ENCODE measurements at regions of chr5 and their contacts with region 1.

Region 1: DNA sequence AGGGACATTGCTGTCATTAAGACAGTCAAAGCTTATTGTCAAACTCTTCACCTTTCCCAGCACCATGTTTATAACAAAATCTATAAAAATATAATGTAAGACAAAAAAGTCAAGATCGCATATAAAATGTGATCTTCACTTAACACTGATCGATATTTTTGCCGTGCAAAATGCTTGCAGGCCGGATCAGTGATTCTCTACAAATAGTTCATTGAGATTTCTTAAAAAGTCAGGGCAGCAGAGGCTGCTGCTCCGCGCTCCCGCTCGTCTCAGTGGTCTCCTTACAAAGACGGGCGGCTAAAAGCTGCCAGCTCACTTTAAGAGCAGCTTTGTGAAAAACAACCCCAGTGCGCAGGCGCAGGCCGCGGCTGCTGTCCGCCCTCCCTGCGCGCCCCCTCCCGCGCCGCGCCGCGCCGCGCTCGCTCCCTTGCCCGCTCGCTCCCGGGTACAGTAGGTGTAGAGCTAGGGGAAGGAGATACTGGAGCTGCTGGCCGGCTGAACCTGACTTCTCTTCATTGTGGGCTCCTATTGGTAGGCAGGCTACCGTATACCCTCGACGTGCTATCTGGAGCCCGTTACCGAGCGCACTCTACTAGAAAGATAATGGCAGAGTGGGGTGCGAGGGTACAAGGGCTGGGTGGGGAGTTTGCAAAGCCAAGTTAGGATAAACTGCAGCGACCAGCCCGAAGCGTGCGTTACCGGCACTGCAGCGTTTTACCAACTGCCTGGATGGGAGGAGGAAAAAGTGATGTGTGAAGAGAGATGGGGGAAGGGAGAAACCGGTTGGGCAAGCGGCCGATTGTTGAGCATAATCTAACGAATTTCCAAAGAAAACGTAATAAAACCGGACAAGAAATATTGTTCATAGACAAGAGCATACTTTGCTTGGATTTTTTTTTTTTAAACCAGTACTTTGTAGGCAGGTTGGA is at the start of gene ARRDC3:
- DNase-seq: peak; percentile 95
- H3K4me3 Mint-ChIP-seq: peak within 1 kb of the TSS; percentile 97
- H3K27ac Mint-ChIP-seq: peak within 1 kb of the TSS; percentile 97
- H3K4me1 Mint-ChIP-seq: peaks cover 15% of the 10 kb centered on the region
- H3K27me3 Mint-ChIP-seq: no peaks in the 10 kb centered on the region
- total RNA-seq, gene ARRDC3: 12.8 to 13.8 TPM

Region 2: DNA sequence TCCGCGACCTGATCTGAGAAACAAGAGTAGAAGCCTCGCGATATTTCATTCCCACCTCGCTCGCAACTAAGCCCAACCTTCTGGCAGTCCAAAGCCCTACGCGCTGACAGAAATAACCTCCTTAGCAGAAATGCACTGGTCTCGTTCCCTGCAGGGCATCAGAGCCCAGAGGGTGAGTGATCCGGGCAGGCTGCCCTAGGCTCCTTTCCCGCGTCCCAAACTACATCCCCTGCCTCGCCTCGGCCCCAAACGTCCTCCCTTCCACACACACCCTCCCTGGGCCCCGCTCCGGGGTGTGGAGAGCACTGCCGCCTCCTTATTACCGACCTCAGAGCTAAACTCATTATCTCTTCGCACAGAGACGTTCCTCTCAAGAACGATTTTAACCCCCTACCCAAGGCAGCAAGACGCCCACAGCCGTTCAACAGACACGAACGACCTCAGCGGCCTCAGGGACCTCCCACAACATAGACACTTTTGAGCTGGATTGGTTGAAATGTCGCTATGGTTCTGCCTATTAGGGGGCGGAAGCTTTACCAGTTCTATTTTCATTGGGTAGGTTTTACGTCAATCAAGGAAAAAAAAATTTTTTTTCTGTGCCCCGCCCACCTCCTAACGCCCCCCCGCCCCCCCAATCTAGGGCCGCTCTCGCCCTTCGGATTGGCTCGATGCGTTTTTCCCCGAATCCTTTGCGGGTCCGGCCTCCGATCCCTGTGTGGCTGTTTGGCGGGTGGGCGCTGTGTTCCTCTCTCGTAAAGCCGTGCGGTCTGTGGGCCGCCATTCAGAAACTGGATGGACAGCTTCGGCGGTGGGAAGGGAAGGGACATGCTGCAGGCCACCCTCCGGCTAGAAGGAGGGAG is 973.7 kb before region 1 on chr5 and contains the start of gene CETN3:
- CTCF ChIA-PET with region 1: no interaction called
- intact Hi-C with region 1: loop called (anchors 2 kb)
- DNase-seq: peak; percentile 93
- H3K4me3 Mint-ChIP-seq: no peak within 1 kb of the TSS
- H3K27ac Mint-ChIP-seq: no peak within 1 kb of the TSS
- H3K4me1 Mint-ChIP-seq: peaks cover 15% of the 10 kb centered on the region
- H3K27me3 Mint-ChIP-seq: no peaks in the 10 kb centered on the region
- total RNA-seq, gene CETN3: 41.9 to 45.3 TPM

Region 3: DNA sequence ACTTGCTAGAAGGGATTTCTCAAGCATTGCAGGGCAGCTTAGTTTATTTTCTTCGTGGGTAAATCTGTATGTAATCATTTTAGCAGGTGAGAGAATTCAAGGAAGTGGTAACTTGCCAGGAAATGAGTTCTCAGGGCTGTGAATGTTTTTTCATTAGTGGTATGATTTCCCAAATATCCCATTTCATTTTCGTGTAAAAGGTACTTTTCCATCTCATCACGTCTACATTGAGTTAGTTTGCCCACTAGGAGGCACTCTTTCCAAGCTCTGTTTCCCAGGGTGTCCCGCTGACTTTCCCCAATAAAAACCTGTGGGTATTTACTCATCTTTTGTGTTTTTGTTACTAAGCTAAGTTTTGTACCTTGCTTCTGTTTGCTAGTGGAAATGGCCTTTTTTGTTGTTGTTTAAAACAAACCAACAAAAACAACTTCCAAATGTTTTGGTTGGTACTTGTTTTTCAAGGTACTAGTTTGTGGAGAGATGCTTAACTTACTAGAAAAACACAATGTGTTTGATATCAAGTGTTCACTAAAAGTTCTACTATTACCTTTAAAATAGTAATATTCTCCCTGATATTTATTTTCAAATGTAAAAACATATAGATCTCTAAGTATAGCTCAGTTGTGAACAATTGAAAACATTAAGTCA is 451.1 kb before region 1 on chr5:
- CTCF ChIA-PET with region 1: interaction called, 37 read pairs
- intact Hi-C with region 1: loop called (anchors 1 kb)
- DNase-seq: peak; percentile 65
- H3K4me3 Mint-ChIP-seq: no peak overlapping the region
- H3K27ac Mint-ChIP-seq: no peak overlapping the region
- H3K4me1 Mint-ChIP-seq: peaks cover 5% of the 10 kb centered on the region
- H3K27me3 Mint-ChIP-seq: peaks cover 8% of the 10 kb centered on the region

Region 4: GRCh38 chr5:91101600-91102379 is 281.5 kb before region 1 on chr5:
- CTCF ChIA-PET with region 1: interaction called, 30 read pairs
- intact Hi-C with region 1: loop called (anchors 1 kb)
- DNase-seq: peak; percentile 70
- H3K4me3 Mint-ChIP-seq: no peak overlapping the region
- H3K27ac Mint-ChIP-seq: no peak overlapping the region
- H3K4me1 Mint-ChIP-seq: no peaks in the 10 kb centered on the region
- H3K27me3 Mint-ChIP-seq: peaks cover 2% of the 10 kb centered on the region

Region 5: GRCh38 chr5:91225848-91226686 is 157.2 kb before region 1 on chr5:
- CTCF ChIA-PET with region 1: interaction called, 184 read pairs
- intact Hi-C with region 1: loop called (anchors 1 kb)
- DNase-seq: peak; percentile 80
- H3K4me3 Mint-ChIP-seq: no peak overlapping the region
- H3K27ac Mint-ChIP-seq: no peak overlapping the region
- H3K4me1 Mint-ChIP-seq: peaks cover 4% of the 10 kb centered on the region
- H3K27me3 Mint-ChIP-seq: no peaks in the 10 kb centered on the region

Region 6: DNA sequence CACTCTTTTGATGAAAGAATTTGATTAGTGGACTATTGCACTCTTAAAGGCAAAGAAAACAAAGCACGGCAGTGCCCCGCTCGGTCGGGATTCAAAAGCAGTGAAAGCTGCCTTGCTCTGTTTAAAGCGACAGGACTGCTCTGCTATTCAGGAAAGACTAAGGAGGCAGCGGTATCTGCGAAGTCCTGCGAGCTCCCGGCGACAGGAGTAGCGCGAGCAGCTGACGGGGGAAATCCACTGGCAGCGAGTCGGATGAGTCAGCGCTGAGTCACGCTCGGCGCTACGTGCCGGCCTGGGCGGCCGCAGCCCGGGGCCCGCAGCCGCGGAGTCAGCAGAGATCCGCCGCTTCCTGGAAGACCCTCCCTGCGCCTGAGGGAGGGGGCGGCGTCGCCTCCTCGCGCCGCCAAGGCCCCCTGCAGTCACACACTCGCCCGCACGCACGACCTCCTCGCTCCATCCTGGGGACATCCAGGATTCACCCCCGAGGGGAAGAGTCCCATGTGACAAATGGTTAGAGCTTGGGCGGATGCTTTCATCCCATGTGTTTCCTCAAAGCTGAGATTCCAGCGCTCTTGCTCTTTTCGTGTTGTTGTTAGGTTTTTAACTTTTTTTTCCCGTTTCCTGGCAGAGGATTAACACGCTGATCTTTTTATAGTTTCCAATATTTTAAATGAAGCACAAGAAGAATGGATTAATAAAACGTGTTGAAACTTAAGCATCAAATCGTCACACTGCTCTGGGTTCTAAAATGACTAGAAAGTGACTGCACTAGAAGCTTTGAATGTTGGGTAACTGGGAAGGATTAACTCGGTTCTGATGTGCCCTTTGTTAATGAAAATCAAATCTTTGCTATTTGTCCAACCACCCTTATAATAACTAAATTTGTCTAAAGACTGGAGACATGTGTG is 102.7 kb before region 1 on chr5:
- CTCF ChIA-PET with region 1: interaction called, 16 read pairs
- intact Hi-C with region 1: loop called (anchors 1 kb)
- DNase-seq: peak; percentile 94
- H3K4me3 Mint-ChIP-seq: peak overlapping the region; percentile 73
- H3K27ac Mint-ChIP-seq: peak overlapping the region; percentile 87
- H3K4me1 Mint-ChIP-seq: peaks cover 42% of the 10 kb centered on the region
- H3K27me3 Mint-ChIP-seq: no peaks in the 10 kb centered on the region

Region 7: GRCh38 chr5:91403438-91403837 is 20.1 kb after region 1 on chr5:
- CTCF ChIA-PET with region 1: interaction called, 21 read pairs
- intact Hi-C with region 1: no loop called
- DNase-seq: no peak
- H3K4me3 Mint-ChIP-seq: no peak overlapping the region
- H3K27ac Mint-ChIP-seq: no peak overlapping the region
- H3K4me1 Mint-ChIP-seq: no peaks in the 10 kb centered on the region
- H3K27me3 Mint-ChIP-seq: no peaks in the 10 kb centered on the region

Region 8: GRCh38 chr5:91456928-91457680 is 73.8 kb after region 1 on chr5:
- CTCF ChIA-PET with region 1: no interaction called
- intact Hi-C with region 1: no loop called
- DNase-seq: no peak
- H3K4me3 Mint-ChIP-seq: no peak overlapping the region
- H3K27ac Mint-ChIP-seq: no peak overlapping the region
- H3K4me1 Mint-ChIP-seq: no peaks in the 10 kb centered on the region
- H3K27me3 Mint-ChIP-seq: no peaks in the 10 kb centered on the region

Measured in activated naive CD4-positive, alpha-beta T cell treated with anti-CD3 and anti-CD28 coated beads for 36 hours (primary cell).